ENCODE measurements at regions of chr5 and their contacts with region 1.

Region 1: DNA sequence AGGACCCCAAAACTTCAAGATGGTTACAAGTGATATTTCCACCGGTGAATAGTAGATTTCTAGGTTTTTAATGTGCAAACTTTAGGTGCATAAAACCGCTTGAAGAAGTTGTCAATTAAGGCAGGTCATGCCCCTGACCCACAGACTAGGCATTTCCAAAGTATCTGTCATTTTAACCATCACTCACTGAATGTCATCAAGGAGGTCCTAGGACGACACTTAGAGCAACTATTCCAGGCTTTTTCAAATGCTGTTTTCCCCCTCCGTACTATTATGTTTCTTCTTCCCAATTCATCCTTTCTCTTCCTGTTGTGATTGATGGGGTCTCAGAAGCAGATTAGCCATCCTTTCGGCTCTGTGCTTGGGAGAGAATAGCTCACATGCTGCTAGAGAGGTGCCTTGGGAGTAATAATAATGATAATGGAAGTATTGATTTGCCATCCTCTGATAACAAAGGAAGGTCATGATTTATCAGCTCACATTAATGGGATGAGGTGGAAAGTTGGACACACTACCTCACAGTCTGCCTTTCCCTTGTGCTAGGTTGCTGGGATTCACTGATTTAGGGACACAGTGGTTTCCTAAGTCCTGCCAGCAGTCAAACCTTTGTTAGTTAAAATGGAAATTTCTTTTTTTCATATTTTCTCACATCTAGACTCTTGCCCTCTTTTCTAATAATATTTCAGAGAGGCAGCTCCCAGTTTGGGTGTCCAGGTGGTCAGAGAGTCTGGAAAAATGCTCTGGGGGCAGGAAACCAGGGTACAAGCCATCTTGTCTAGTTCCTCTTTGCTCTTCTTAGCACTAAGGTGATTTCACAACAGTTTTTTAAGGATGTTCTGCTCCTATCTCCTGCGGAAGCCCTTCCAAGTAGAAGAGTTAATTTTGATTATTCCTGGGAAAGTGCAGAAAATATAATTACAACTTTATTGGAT is 67.0 kb downstream of the PTTG1 start:
- DNase-seq: no peak
- H3K4me3 ChIP-seq: no peak overlapping the region
- H3K27ac ChIP-seq: no peak overlapping the region
- H3K4me1 ChIP-seq: no peaks in the 10 kb centered on the region
- H3K27me3 ChIP-seq: no peaks in the 10 kb centered on the region
- CTCF ChIP-seq: no peak

Region 2: DNA sequence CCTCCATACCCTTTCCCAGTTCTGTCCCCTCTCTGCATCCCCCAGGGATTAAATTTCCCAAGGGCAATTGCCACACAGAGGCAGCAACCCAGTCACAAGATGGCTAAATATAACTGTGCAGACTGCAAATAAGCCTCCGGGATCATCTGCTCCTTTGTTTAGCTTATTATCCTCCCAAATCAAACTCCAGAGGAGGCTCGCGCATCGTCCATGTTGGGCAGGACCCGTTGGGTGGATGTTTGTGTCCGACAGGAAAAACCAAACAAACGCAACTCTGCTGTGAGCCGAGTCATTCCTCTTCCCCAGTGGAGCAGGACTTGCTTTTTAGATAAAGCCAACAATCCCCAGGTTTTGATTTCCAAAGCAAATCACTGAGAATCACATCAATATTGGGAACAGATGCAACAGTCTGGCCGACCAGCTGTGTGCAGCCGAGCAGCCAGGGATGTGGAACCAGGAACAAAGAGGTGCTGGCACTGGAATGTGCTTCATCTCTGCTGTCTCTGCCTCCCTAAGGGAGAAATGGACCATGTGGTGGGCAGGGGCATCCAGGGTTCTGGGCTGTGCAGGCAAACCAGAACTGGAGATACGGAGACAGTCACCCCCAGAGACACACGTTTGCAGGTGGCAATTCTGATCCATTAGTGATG is 22.7 kb after region 1 on chr5:
- intact Hi-C with region 1: loop called (anchors 1 kb)
- DNase-seq: no peak
- H3K4me3 ChIP-seq: no peak overlapping the region
- H3K27ac ChIP-seq: no peak overlapping the region
- H3K4me1 ChIP-seq: no peaks in the 10 kb centered on the region
- H3K27me3 ChIP-seq: peaks cover 0 to 19% of the 10 kb centered on the region in 2 donors
- CTCF ChIP-seq: no peak